ENCODE measurements at regions of chr20 and their contacts with region 1.

Region 1: DNA sequence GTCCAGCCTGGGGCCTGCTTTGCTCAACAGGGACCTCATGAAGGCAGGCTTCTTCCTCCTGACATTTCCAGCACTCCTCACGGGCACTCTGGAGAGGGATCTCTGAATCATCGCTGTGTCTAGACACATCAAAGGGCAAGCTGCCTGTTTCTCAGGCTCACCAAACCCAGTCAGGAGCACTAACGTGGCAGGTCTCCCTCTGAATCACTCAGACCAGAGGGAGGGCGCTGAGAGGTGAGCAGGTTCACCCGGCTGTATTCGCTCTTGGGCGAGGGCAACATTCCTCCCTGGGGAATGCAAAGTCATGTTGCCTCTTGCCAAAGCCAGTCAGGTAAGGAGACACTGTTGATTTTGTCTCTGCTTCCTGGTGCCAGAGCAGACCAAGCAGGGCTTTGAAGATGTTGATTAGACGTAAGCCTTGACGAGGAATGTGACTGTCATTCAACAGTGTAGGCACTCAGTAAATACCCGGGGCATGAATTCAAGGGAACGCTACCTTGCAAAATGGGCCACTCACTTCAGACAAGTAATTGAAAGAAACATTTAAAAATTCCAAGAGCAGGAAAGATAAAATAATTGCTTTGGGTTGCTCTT is 50.1 kb downstream of the CYP24A1 start:
- DNase-seq: peak; percentile 99
- H3K4me3 Mint-ChIP-seq: peak overlapping the region; percentile 45
- H3K27ac Mint-ChIP-seq: peak overlapping the region; percentile 96
- H3K4me1 Mint-ChIP-seq: peaks cover 37% of the 10 kb centered on the region
- H3K27me3 Mint-ChIP-seq: no peaks in the 10 kb centered on the region
- CTCF ChIP-seq: no peak

Region 2: GRCh38 chr20:54110041-54110841 is 13.4 kb before region 1 on chr20:
- CTCF ChIA-PET with region 1: interaction called, 66 read pairs
- POLR2A ChIA-PET with region 1: interaction called, 52 read pairs
- intact Hi-C with region 1: no loop called
- DNase-seq: no peak
- H3K4me3 Mint-ChIP-seq: no peak overlapping the region
- H3K27ac Mint-ChIP-seq: no peak overlapping the region
- H3K4me1 Mint-ChIP-seq: peaks cover 25% of the 10 kb centered on the region
- H3K27me3 Mint-ChIP-seq: no peaks in the 10 kb centered on the region
- CTCF ChIP-seq: no peak

Region 3: DNA sequence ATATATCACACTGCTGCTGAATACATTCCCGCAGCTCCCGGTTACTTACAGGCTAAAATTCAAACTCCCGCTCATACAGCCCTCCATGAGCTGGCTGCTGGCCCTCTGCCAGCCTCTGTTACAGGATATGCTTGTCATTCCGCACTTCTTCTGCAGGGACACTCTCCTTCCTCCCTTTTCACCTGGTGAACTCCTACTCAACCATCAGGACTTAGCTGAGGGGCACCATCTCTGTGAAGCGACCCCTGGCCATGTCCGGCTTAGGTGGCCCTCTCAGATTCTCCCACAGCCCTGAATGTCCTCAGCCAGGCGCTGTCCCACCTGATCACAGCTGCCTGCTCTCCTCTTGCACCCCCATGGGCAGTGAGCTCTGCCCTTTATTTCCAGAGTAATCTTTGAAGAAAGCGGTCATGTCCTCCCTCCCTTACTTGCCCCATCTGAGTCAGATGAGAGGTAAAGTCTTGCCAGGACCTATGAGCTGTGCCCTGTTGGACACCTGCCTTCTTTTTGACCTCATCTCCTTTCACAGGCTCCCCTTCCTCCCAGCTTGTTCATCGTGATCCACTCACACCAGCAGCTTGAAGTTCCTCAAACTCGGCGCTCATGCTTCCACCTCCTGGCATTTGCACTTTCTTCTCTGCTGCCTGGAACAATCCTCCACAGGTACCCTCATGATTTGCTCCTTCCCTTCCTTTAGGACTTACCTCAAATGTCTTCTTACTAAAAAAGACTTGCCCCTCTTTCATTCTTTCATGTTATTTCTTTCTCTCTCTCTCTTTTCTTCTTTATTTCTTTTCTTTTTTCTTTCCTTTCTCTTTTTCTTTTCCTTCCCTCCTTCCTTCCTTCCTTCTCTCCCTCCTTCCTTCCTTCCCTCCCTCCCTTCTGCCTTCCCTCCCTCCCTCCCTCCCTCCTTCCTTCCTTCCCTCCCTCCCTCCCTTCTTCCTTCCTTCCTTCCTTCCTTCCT is 44.5 kb after region 1 on chr20:
- CTCF ChIA-PET with region 1: interaction called, 4 read pairs
- POLR2A ChIA-PET with region 1: interaction called, 3 read pairs
- intact Hi-C with region 1: loop called (anchors 5 kb)
- DNase-seq: peak; percentile 86
- H3K4me3 Mint-ChIP-seq: peak overlapping the region; percentile 28
- H3K27ac Mint-ChIP-seq: peak overlapping the region; percentile 50
- H3K4me1 Mint-ChIP-seq: peaks cover 18% of the 10 kb centered on the region
- H3K27me3 Mint-ChIP-seq: no peaks in the 10 kb centered on the region
- CTCF ChIP-seq: no peak

Region 4: DNA sequence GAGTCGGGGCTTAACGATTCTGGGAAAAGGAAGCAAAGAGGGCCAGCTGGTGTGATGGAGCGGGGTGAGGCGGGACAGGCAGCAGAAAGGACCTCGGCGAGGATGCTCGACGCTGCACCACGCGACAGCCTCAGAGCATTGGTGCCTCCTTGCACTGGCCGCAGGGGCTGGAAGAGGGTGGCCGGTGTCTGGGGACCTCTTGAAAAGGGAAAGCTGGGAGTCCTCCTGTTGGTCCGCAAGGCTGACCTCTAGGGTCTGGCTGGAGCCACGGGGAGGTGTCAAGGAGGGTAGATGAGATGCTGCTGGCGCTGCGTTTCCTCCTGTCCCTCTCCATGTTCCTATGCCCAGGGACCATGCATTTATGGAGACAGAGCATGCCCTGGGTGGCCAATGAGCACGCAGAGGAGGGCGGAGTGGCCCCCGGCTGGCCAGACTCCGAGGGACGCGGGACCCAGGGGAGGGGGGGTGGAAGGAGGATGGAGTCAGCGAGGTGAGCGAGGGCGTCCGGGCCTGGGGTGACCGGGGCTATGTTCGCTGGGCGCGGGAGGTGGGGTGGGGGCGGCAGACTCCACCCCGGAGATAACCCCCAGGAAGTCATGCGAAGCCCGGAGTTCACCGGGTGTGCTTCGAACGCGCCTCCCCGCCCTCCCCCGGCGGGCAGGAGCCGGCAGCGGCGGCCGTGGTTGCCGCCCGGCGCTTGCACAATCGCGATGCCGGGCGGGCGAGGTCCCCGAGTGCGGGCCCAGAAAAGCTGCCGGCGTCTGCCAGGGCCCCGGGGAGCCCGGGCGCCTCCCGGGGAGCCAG is 50.2 kb after region 1 on chr20 and contains the start of gene CYP24A1:
- CTCF ChIA-PET with region 1: interaction called, 4 read pairs
- POLR2A ChIA-PET with region 1: interaction called, 11 read pairs
- intact Hi-C with region 1: loop called (anchors 5 kb)
- DNase-seq: peak; percentile 41
- H3K4me3 Mint-ChIP-seq: peak within 1 kb of the TSS; percentile 67
- H3K27ac Mint-ChIP-seq: no peak within 1 kb of the TSS
- H3K4me1 Mint-ChIP-seq: peaks cover 20% of the 10 kb centered on the region
- H3K27me3 Mint-ChIP-seq: no peaks in the 10 kb centered on the region
- CTCF ChIP-seq: no peak
- total RNA-seq, gene CYP24A1: 0.28 and 0.34 TPM in 2 replicates

Region 5: GRCh38 chr20:54179946-54180345 is 56.3 kb after region 1 on chr20:
- CTCF ChIA-PET with region 1: interaction called, 3 read pairs
- POLR2A ChIA-PET with region 1: interaction called, 11 read pairs
- intact Hi-C with region 1: no loop called
- DNase-seq: peak; percentile 72
- H3K4me3 Mint-ChIP-seq: no peak overlapping the region
- H3K27ac Mint-ChIP-seq: peak overlapping the region; percentile 13
- H3K4me1 Mint-ChIP-seq: peaks cover 30% of the 10 kb centered on the region
- H3K27me3 Mint-ChIP-seq: no peaks in the 10 kb centered on the region
- CTCF ChIP-seq: no peak

Region 6: DNA sequence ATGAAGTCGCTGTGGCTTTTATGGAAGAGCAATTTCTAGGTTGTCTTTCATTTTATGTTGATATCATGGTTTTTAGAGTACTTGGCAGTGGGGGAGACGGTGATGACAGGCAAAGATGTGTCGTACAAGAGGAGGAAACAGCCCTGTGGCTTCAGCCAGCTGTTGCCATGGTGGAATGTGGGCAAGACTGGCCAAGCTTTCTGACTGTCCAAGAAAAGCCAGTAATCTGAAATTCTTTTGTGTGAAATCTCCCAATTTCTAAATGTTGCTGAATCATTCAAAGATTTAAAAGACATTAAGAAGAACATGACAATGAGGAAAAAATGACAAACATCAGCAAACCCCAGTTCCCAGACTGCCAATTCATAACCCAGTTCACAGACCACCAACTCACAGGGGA is 107.4 kb after region 1 on chr20:
- CTCF ChIA-PET with region 1: no interaction called
- POLR2A ChIA-PET with region 1: no interaction called
- intact Hi-C with region 1: no loop called
- DNase-seq: no peak
- H3K4me3 Mint-ChIP-seq: no peak overlapping the region
- H3K27ac Mint-ChIP-seq: no peak overlapping the region
- H3K4me1 Mint-ChIP-seq: no peaks in the 10 kb centered on the region
- H3K27me3 Mint-ChIP-seq: no peaks in the 10 kb centered on the region
- CTCF ChIP-seq: no peak

Region 7: GRCh38 chr20:54276577-54277194 is 153.0 kb after region 1 on chr20:
- CTCF ChIA-PET with region 1: no interaction called
- POLR2A ChIA-PET with region 1: no interaction called
- intact Hi-C with region 1: no loop called
- DNase-seq: no peak
- H3K4me3 Mint-ChIP-seq: no peak overlapping the region
- H3K27ac Mint-ChIP-seq: no peak overlapping the region
- H3K4me1 Mint-ChIP-seq: peaks cover 5% of the 10 kb centered on the region
- H3K27me3 Mint-ChIP-seq: no peaks in the 10 kb centered on the region
- CTCF ChIP-seq: no peak

Measured in MCF 10A (cell line).